PC-9 (cell line): ENCODE measurements at regions of chr4 and their contacts with region 1.

Region 1: DNA sequence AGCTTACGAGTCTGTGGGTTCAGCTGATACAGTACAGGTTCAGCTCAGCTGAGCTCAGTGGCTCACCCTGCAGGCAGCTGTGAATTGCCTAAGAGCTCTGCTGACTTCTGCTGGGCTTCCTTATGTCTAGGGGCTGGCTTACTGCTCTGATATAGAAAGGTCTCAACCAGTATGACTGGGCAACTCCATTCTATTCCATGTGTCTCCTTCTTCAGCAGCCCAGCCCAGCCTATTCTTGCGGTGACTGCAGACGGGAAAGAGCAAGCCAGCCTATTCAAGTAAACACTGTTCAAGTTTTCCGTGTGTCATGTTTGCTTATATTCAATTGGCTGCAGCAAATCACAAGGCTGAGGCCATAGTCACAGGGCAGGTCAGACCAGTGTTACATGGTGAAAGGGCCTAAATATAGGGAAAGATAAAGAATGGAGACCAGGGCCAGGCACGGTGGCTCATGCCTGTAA is 615.4 kb upstream of the ZFP42 start:
- DNase-seq: peak in 1 of 2 experiments; percentile 8
- H3K4me3 ChIP-seq: no peak overlapping the region
- H3K27ac ChIP-seq: no peak overlapping the region
- H3K4me1 ChIP-seq: no peaks in the 10 kb centered on the region
- H3K27me3 ChIP-seq: no peaks in the 10 kb centered on the region
- CTCF ChIP-seq: peak; percentile 32; the same call in 1 of the 2 replicates

Region 2: DNA sequence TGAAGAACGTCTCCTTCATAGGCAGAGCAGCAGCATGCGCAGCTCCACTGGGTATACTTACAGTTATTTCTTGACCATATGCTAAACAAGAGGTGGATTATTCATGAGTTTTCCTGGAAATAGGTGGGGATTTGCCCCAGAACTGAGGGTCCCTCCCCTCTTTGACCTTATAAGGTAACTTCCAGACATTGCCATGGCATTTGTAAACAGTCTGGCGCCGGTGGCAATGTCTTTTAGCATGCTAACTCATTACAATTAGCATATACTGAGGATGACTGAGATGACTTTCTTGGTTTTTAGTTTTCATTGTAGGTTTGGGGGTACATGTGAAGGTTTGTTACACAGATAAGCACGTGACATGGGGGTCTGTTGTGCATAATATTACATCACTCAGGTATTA is 922.2 kb before region 1 on chr4:
- CTCF ChIA-PET with region 1: no interaction called
- POLR2A ChIA-PET with region 1: interaction called, 13 read pairs
- intact Hi-C with region 1: no loop called
- DNase-seq: no peak
- H3K4me3 ChIP-seq: no peak overlapping the region
- H3K27ac ChIP-seq: no peak overlapping the region
- H3K4me1 ChIP-seq: no peaks in the 10 kb centered on the region
- H3K27me3 ChIP-seq: peaks cover 25% of the 10 kb centered on the region; the same call in 1 of the 2 replicates
- CTCF ChIP-seq: no peak

Region 3: GRCh38 chr4:187141101-187141500 is 239.1 kb before region 1 on chr4:
- CTCF ChIA-PET with region 1: no interaction called
- POLR2A ChIA-PET with region 1: no interaction called
- intact Hi-C with region 1: no loop called
- DNase-seq: no peak
- H3K4me3 ChIP-seq: no peak overlapping the region
- H3K27ac ChIP-seq: no peak overlapping the region
- H3K4me1 ChIP-seq: no peaks in the 10 kb centered on the region
- H3K27me3 ChIP-seq: no peaks in the 10 kb centered on the region
- CTCF ChIP-seq: no peak